Head of caudate nucleus (tissue), 42 donors: ENCODE measurements at regions of chr4 and their contacts with region 1.

Region 1: DNA sequence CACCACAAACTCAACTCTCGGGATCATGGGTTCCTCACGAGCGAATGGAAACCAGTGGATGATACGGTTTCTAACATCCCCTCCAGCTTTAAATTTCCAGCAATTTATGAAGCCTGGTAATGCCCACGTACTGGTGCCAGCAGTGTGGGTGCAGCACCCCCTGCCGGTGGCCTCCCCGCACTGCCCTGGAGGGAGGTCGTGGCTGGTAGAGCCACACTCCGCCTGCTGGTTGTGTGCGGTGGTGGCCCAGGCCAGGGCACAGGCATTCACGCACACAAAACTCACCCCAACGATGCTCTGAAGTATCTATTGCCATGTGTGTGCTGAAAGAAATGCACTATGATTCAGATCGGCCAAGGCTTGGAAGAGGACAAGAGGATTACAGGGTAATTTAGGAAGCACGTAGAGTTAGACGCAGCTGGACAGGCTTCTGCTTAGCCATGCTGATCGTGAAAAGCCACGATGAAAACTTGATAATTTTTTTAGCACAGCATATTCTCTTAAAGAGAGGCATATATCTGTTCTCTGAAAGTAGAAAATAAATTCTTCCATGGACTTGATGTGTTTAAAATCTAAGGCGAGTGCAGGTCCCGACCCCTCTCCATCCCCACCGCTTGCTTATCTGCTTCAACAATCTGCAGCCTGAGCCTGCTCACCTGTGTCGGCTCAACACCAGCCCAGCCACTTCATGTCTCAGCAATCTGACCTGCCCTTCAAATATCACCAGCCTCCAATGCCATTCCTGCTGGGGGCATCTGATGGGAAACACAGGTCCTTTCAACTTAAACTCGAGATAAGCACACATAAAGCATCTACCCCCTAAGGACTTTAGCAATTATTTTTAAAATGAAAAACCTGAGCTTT is 59.0 kb downstream of the SCD5 start:
- DNase-seq: peak in 41 of 42 donors; percentile 50 to 95 (median 80)

Region 2: GRCh38 chr4:82415922-82416365 is 323.6 kb before region 1 on chr4:
- intact Hi-C with region 1: no loop called
- DNase-seq: no peak

Region 3: DNA sequence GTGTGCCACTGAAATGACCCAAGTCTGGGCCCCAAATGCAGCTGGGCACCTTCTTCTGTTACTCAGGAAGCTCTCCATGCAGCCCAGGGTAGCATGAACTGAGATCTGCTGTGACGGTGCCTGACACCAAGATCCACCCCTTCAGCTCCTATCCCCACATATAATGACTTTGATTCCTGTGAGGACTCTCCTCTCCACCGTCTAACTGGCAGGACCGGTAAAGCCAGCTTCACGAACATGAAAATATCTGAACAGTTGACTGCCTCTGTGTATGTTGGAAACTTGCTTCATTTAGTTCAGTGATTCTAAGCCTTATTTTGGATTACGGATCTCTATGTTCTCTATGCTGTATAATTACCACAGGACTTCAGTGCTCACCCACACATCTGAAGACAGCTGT is 62.2 kb before region 1 on chr4:
- intact Hi-C with region 1: no loop called
- DNase-seq: no peak

Region 4: GRCh38 chr4:82798168-82799005 is 58.8 kb after region 1 on chr4 and contains the start of gene SCD5:
- intact Hi-C with region 1: loop called (anchors 10 kb)
- DNase-seq: peak; percentile 74 to 94 (median 89)